Activated CD4-positive, alpha-beta T cell treated with anti-CD3 and anti-CD28 coated beads for 36 hours (primary cell): ENCODE measurements at regions of chr5 and their contacts with region 1.

Region 1: GRCh38 chr5:168268949-168269943 is 22.2 kb upstream of the WWC1 start:
- DNase-seq: peak; percentile 87
- ATAC-seq: peak; percentile 79
- H3K4me3 Mint-ChIP-seq: peak overlapping the region; percentile 28
- H3K27ac Mint-ChIP-seq: no peak overlapping the region
- H3K4me1 Mint-ChIP-seq: peaks cover 18% of the 10 kb centered on the region
- H3K27me3 Mint-ChIP-seq: peaks cover 8% of the 10 kb centered on the region

Region 2: GRCh38 chr5:168409580-168410458 is 140.6 kb after region 1 on chr5:
- CTCF ChIA-PET with region 1: interaction called, 3 read pairs
- POLR2A ChIA-PET with region 1: no interaction called
- intact Hi-C with region 1: loop called in 1 of 2 experiments (anchors 10 kb)
- DNase-seq: peak; percentile 53
- ATAC-seq: peak; percentile 78
- H3K4me3 Mint-ChIP-seq: peak overlapping the region; percentile 45
- H3K27ac Mint-ChIP-seq: no peak overlapping the region
- H3K4me1 Mint-ChIP-seq: peaks cover 19% of the 10 kb centered on the region
- H3K27me3 Mint-ChIP-seq: peaks cover 26% of the 10 kb centered on the region

Region 3: GRCh38 chr5:168434746-168435321 is 165.6 kb after region 1 on chr5:
- CTCF ChIA-PET with region 1: interaction called, 3 read pairs
- POLR2A ChIA-PET with region 1: no interaction called
- intact Hi-C with region 1: loop called in 1 of 2 experiments (anchors 5 kb)
- DNase-seq: peak; percentile 6
- ATAC-seq: peak; percentile 71
- H3K4me3 Mint-ChIP-seq: no peak overlapping the region
- H3K27ac Mint-ChIP-seq: no peak overlapping the region
- H3K4me1 Mint-ChIP-seq: no peaks in the 10 kb centered on the region
- H3K27me3 Mint-ChIP-seq: peaks cover 2% of the 10 kb centered on the region

Region 4: GRCh38 chr5:168679515-168679920 is 410.3 kb after region 1 on chr5:
- CTCF ChIA-PET with region 1: no interaction called
- POLR2A ChIA-PET with region 1: no interaction called
- intact Hi-C with region 1: loop called in 1 of 2 experiments (anchors 5 kb)
- DNase-seq: peak; percentile 84
- ATAC-seq: peak; percentile 28
- H3K4me3 Mint-ChIP-seq: no peak overlapping the region
- H3K27ac Mint-ChIP-seq: no peak overlapping the region
- H3K4me1 Mint-ChIP-seq: peaks cover 28% of the 10 kb centered on the region
- H3K27me3 Mint-ChIP-seq: no peaks in the 10 kb centered on the region

Region 5: DNA sequence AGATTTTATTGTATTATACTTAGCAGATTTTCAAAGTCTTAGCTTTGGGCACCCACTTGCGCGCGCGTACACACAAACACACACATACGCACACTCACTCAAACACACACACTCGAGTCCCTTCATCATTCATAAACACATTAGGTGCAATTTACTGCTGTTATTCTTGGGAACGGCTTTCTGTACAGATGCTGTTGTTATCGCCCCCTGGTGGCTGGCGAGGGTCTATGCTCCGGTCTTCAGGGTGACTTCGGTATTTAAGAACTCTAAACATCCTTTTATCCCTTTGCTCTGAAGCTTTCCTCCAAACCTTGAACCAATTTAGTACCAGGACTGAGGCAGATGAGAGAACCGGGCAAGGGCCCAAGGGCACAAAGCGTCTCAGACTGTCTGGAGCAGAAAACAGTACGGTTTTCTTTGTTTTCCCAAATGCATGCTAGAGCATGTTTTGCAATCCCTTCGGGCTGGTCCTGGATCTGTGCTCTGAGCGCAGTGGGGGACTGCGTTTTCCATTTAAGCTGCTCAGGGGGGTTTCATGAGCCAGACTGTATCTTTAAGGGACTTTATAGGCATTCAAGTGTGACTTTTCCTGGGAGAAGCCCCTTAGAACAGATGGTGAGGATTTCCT is 1033.4 kb after region 1 on chr5:
- CTCF ChIA-PET with region 1: no interaction called
- POLR2A ChIA-PET with region 1: no interaction called
- intact Hi-C with region 1: loop called in 1 of 2 experiments (anchors 1 kb)
- DNase-seq: peak; percentile 83
- ATAC-seq: peak; percentile 78
- H3K4me3 Mint-ChIP-seq: no peak overlapping the region
- H3K27ac Mint-ChIP-seq: no peak overlapping the region
- H3K4me1 Mint-ChIP-seq: peaks cover 13% of the 10 kb centered on the region
- H3K27me3 Mint-ChIP-seq: peaks cover 56% of the 10 kb centered on the region